ENCODE measurements at regions of chr2 and their contacts with region 1.

Region 1: GRCh38 chr2:14554849-14555545 is 77.5 kb upstream of the LRATD1 start:
- DNase-seq: no peak

Region 2: GRCh38 chr2:14616342-14616741 is 61.3 kb after region 1 on chr2:
- intact Hi-C with region 1: no loop called
- DNase-seq: no peak

Region 3: GRCh38 chr2:16321872-16322271 is 1766.9 kb after region 1 on chr2:
- intact Hi-C with region 1: loop called in 1 of 2 experiments (anchors 5 kb)
- DNase-seq: no peak